PC-9 (cell line): ENCODE measurements at regions of chr4 and their contacts with region 1.

Region 1: GRCh38 chr4:99405433-99406115 is 29.6 kb downstream of the ADH7 start:
- DNase-seq: peak; percentile 51 to 54
- H3K4me3 ChIP-seq: no peak overlapping the region
- H3K27ac ChIP-seq: 0 out of 2 replicates have a peak overlapping the region, but pooled peaks have one; percentile 21
- H3K4me1 ChIP-seq: peaks cover 12% of the 10 kb centered on the region
- H3K27me3 ChIP-seq: no peaks in the 10 kb centered on the region
- CTCF ChIP-seq: peak; percentile 93

Region 2: GRCh38 chr4:99117876-99118693 is 287.5 kb before region 1 on chr4:
- CTCF ChIA-PET with region 1: no interaction called
- POLR2A ChIA-PET with region 1: no interaction called
- intact Hi-C with region 1: loop called (anchors 2 kb)
- DNase-seq: no peak
- H3K4me3 ChIP-seq: no peak overlapping the region
- H3K27ac ChIP-seq: no peak overlapping the region
- H3K4me1 ChIP-seq: no peaks in the 10 kb centered on the region
- H3K27me3 ChIP-seq: no peaks in the 10 kb centered on the region
- CTCF ChIP-seq: peak; percentile 68

Region 3: GRCh38 chr4:99366491-99366890 is 39.1 kb before region 1 on chr4:
- CTCF ChIA-PET with region 1: no interaction called
- POLR2A ChIA-PET with region 1: no interaction called
- intact Hi-C with region 1: no loop called
- DNase-seq: no peak
- H3K4me3 ChIP-seq: no peak overlapping the region
- H3K27ac ChIP-seq: no peak overlapping the region
- H3K4me1 ChIP-seq: no peaks in the 10 kb centered on the region
- H3K27me3 ChIP-seq: no peaks in the 10 kb centered on the region
- CTCF ChIP-seq: no peak